Ascending aorta (tissue), 2 donors: ENCODE measurements at regions of chr1 and their contacts with region 1.

Region 1: GRCh38 chr1:8061210-8061609 is 35.1 kb upstream of the ERRFI1 start:
- DNase-seq: peak; percentile 28 to 84
- H3K4me3 ChIP-seq: peak overlapping the region in 1 of 2 donors; percentile 49
- H3K27ac ChIP-seq: peak overlapping the region; percentile 78 to 89
- H3K4me1 ChIP-seq: peaks cover 0 to 33% of the 10 kb centered on the region in 2 donors
- H3K27me3 ChIP-seq: no peaks in the 10 kb centered on the region
- CTCF ChIP-seq: no peak

Region 2: DNA sequence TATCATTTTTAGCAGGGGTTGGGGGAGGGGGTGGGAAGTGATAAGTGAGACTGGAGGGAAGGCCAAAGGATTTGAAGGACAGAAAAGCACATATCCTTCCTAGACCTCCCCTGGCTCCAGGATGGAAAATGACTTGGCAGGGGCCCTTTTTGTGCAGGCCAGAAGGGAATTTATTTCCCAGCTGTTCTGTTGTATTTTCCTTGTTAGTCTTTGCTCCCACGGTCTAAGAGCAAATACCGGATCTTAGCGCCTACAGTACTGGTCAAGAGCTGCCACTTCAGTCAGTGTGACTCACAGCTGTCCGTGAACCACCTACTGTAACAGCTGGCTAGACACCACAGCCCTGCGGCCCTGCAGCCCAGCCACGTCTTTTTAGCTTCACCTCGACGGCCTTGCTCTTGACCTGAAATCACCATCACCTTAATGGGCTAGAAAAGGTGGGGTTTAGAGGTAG is 15.9 kb after region 1 on chr1:
- intact Hi-C with region 1: loop called (anchors 1 kb)
- DNase-seq: peak in 1 of 2 donors; percentile 89
- H3K4me3 ChIP-seq: no peak overlapping the region
- H3K27ac ChIP-seq: peak overlapping the region; percentile 31 to 79
- H3K4me1 ChIP-seq: peaks cover 14 to 30% of the 10 kb centered on the region in 2 donors
- H3K27me3 ChIP-seq: no peaks in the 10 kb centered on the region
- CTCF ChIP-seq: peak in 1 of 3 experiments; percentile 17